CD4-positive, alpha-beta T cell (primary cell): ENCODE measurements at regions of chr12 and their contacts with region 1.

Region 1: GRCh38 chr12:104478396-104479122 is 21.8 kb downstream of the CHST11 start:
- DNase-seq: peak in 7 of 14 experiments; percentile 16 to 88 (median 50)
- ATAC-seq: peak; percentile 81
- H3K4me3 ChIP-seq: peak overlapping the region; percentile 37
- H3K4me3 Mint-ChIP-seq: peak overlapping the region; percentile 89
- H3K27ac ChIP-seq: peak overlapping the region; percentile 8 to 33
- H3K27ac Mint-ChIP-seq: peak overlapping the region; percentile 87
- H3K4me1 ChIP-seq: peaks cover 71% of the 10 kb centered on the region
- H3K4me1 Mint-ChIP-seq: peaks cover 88% of the 10 kb centered on the region
- H3K27me3 ChIP-seq: no peaks in the 10 kb centered on the region
- H3K27me3 Mint-ChIP-seq: no peaks in the 10 kb centered on the region
- CTCF ChIP-seq: no peak

Region 2: GRCh38 chr12:104462931-104463339 is 15.6 kb before region 1 on chr12:
- CTCF ChIA-PET with region 1: interaction called, 14 read pairs
- POLR2A ChIA-PET with region 1: interaction called, 56 read pairs
- intact Hi-C with region 1: loop called in 1 of 2 experiments (anchors 2 kb)
- DNase-seq: peak in 9 of 14 experiments; percentile 29 to 80 (median 60)
- ATAC-seq: peak; percentile 52
- H3K4me3 ChIP-seq: peak overlapping the region; percentile 24
- H3K4me3 Mint-ChIP-seq: peak overlapping the region; percentile 85
- H3K27ac ChIP-seq: peak overlapping the region; percentile 59 to 74
- H3K27ac Mint-ChIP-seq: peak overlapping the region; percentile 86
- H3K4me1 ChIP-seq: peaks cover 70% of the 10 kb centered on the region
- H3K4me1 Mint-ChIP-seq: peaks cover 85% of the 10 kb centered on the region
- H3K27me3 ChIP-seq: no peaks in the 10 kb centered on the region
- H3K27me3 Mint-ChIP-seq: no peaks in the 10 kb centered on the region
- CTCF ChIP-seq: no peak

Region 3: GRCh38 chr12:104494137-104494792 is 15.7 kb after region 1 on chr12:
- CTCF ChIA-PET with region 1: interaction called, 3 read pairs
- POLR2A ChIA-PET with region 1: interaction called, 20 read pairs
- intact Hi-C with region 1: loop called in 1 of 2 experiments (anchors 2 kb)
- DNase-seq: peak in 12 of 14 experiments; percentile 32 to 67 (median 50)
- ATAC-seq: peak; percentile 48
- H3K4me3 ChIP-seq: peak overlapping the region; percentile 29
- H3K4me3 Mint-ChIP-seq: peak overlapping the region; percentile 80
- H3K27ac ChIP-seq: peak overlapping the region; percentile 58 to 64
- H3K27ac Mint-ChIP-seq: peak overlapping the region; percentile 95
- H3K4me1 ChIP-seq: peaks cover 65% of the 10 kb centered on the region
- H3K4me1 Mint-ChIP-seq: peaks cover 91% of the 10 kb centered on the region
- H3K27me3 ChIP-seq: no peaks in the 10 kb centered on the region
- H3K27me3 Mint-ChIP-seq: no peaks in the 10 kb centered on the region
- CTCF ChIP-seq: no peak

Region 4: GRCh38 chr12:104535369-104535768 is 56.8 kb after region 1 on chr12:
- CTCF ChIA-PET with region 1: no interaction called
- POLR2A ChIA-PET with region 1: no interaction called
- intact Hi-C with region 1: no loop called
- DNase-seq: no peak
- ATAC-seq: no peak
- H3K4me3 ChIP-seq: no peak overlapping the region
- H3K4me3 Mint-ChIP-seq: no peak overlapping the region
- H3K27ac ChIP-seq: no peak overlapping the region
- H3K27ac Mint-ChIP-seq: peak overlapping the region; percentile 50
- H3K4me1 ChIP-seq: peaks cover 7% of the 10 kb centered on the region
- H3K4me1 Mint-ChIP-seq: peaks cover 75% of the 10 kb centered on the region
- H3K27me3 ChIP-seq: no peaks in the 10 kb centered on the region
- H3K27me3 Mint-ChIP-seq: no peaks in the 10 kb centered on the region
- CTCF ChIP-seq: no peak